ENCODE measurements at regions of chr15 and their contacts with region 1.

Region 1: GRCh38 chr15:46312133-46312740 is 677.4 kb downstream of the SQOR start:
- DNase-seq: peak; percentile 54 to 73
- ATAC-seq: peak; percentile 70 to 93 (median 81)
- H3K4me3 ChIP-seq: no peak overlapping the region
- H3K27ac ChIP-seq: no peak overlapping the region
- H3K4me1 ChIP-seq: peaks cover 0 to 16% (median 9%) of the 10 kb centered on the region in 9 donors
- H3K27me3 ChIP-seq: peaks cover 0 to 3% (median 0%) of the 10 kb centered on the region in 7 donors
- CTCF ChIP-seq: peak; percentile 70 to 96 (median 91)

Region 2: GRCh38 chr15:45705510-45706473 is 606.4 kb before region 1 on chr15:
- intact Hi-C with region 1: loop called in 3 of 10 experiments (anchors 5 to 10 kb)
- DNase-seq: peak; percentile 47 to 69
- ATAC-seq: peak; percentile 84 to 95 (median 92)
- H3K4me3 ChIP-seq: peak overlapping the region; percentile 2 to 67 (median 56)
- H3K27ac ChIP-seq: no peak overlapping the region
- H3K4me1 ChIP-seq: peaks cover 0 to 18% (median 6%) of the 10 kb centered on the region in 9 donors
- H3K27me3 ChIP-seq: peaks cover 0 to 12% (median 6%) of the 10 kb centered on the region in 7 donors
- CTCF ChIP-seq: peak; percentile 82 to 96 (median 94)

Region 3: DNA sequence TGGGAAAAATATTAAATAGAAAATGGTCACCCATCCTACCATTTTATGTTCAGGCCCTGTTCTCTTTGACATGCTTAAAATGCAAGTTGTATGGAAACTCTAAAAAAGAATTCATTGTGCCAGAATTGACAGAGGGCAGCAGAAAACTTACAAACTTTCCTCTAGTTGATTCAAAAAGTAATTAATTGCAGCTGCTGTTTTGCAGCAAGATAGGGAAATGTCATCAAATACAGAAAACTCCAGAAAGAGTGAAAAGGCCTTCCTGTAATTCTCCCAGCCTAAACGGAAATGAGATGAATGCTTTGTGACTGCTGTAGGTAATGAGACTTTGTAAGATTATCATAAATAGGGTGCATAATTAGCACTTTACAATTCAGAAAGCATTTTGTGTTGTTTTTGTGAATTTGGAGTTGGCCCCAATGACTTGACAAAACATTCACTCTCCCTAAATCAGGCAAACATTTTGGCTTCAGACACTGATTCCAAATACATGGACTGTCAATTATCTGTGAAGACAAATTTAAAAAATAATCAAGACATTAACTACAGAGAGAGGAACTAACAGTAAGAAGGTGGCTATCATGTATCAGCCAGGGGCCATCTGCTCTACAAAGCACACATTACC is 184.4 kb after region 1 on chr15:
- intact Hi-C with region 1: loop called in 1 of 10 experiments (anchors 10 kb)
- DNase-seq: no peak
- ATAC-seq: no peak
- H3K4me3 ChIP-seq: no peak overlapping the region
- H3K27ac ChIP-seq: peak overlapping the region in 4 of 10 donors; percentile 3 to 52 (median 10)
- H3K4me1 ChIP-seq: no peaks in the 10 kb centered on the region
- H3K27me3 ChIP-seq: no peaks in the 10 kb centered on the region
- CTCF ChIP-seq: no peak

Region 4: GRCh38 chr15:46681901-46682300 is 369.7 kb after region 1 on chr15:
- intact Hi-C with region 1: no loop called
- DNase-seq: no peak
- ATAC-seq: no peak
- H3K4me3 ChIP-seq: no peak overlapping the region
- H3K27ac ChIP-seq: no peak overlapping the region
- H3K4me1 ChIP-seq: no peaks in the 10 kb centered on the region
- H3K27me3 ChIP-seq: no peaks in the 10 kb centered on the region
- CTCF ChIP-seq: no peak

Measured in heart right ventricle (tissue), 16 donors.